IMR-90 (cell line): ENCODE measurements at regions of chr10 and their contacts with region 1.

Region 1: DNA sequence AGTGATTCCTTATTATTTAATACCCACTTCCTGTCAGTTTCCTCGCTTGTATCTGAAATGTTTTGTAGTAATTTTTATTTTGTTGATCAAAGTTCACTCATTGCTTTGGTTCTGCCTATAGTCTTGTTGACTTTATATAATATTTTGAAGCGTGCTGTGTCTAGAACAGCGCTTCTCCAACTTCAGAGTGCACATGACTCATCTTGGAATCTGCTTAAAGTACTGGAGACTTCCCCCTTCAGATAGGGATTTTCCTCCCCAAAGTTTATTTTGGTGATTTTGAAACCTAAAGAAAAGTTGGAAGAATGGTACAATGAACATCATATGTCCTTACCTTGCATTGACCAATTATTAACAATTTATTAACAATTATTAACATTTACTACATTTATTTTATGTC is 5.8 kb downstream of the COMTD1 start:
- DNase-seq: peak; percentile 71
- ATAC-seq: no peak
- H3K4me3 ChIP-seq: no peak overlapping the region
- H3K27ac ChIP-seq: no peak overlapping the region
- H3K4me1 ChIP-seq: peaks cover 26% of the 10 kb centered on the region
- H3K27me3 ChIP-seq: no peaks in the 10 kb centered on the region
- CTCF ChIP-seq: no peak
- POLR2A ChIP-seq: no peak
- RAD21 ChIP-seq: no peak

Region 2: GRCh38 chr10:75187961-75188426 is 42.0 kb before region 1 on chr10:
- CTCF ChIA-PET with region 1: interaction called, 7 read pairs
- POLR2A ChIA-PET with region 1: interaction called, 4 read pairs
- dilution Hi-C with region 1: no loop called
- in situ Hi-C with region 1: loop called (anchors 5 kb)
- intact Hi-C with region 1: loop called (anchors 1 kb)
- DNase-seq: peak; percentile 74
- ATAC-seq: no peak
- H3K4me3 ChIP-seq: no peak overlapping the region
- H3K27ac ChIP-seq: no peak overlapping the region
- H3K4me1 ChIP-seq: peaks cover 16% of the 10 kb centered on the region
- H3K27me3 ChIP-seq: no peaks in the 10 kb centered on the region
- CTCF ChIP-seq: peak; percentile 83
- POLR2A ChIP-seq: no peak
- RAD21 ChIP-seq: peak; percentile 89